ENCODE measurements at regions of chr4 and their contacts with region 1.

Region 1: GRCh38 chr4:152779513-152780266 is at the starts of genes ARFIP1 and TIGD4:
- DNase-seq: peak; percentile 99
- H3K4me3 Mint-ChIP-seq: peak within 1 kb of the TSS; percentile 100
- H3K27ac Mint-ChIP-seq: peak within 1 kb of the TSS; percentile 97
- H3K4me1 Mint-ChIP-seq: peaks cover 44% of the 10 kb centered on the region
- H3K27me3 Mint-ChIP-seq: peaks cover 30% of the 10 kb centered on the region
- total RNA-seq, gene ARFIP1: 13.0 and 14.6 TPM in 2 replicates
- total RNA-seq, gene TIGD4: 0.28 and 0.31 TPM in 2 replicates

Region 2: GRCh38 chr4:152747444-152747843 is 32.2 kb before region 1 on chr4:
- intact Hi-C with region 1: no loop called
- DNase-seq: no peak
- H3K4me3 Mint-ChIP-seq: no peak overlapping the region
- H3K27ac Mint-ChIP-seq: no peak overlapping the region
- H3K4me1 Mint-ChIP-seq: no peaks in the 10 kb centered on the region
- H3K27me3 Mint-ChIP-seq: peaks cover 6% of the 10 kb centered on the region

Region 3: GRCh38 chr4:152807294-152807829 is 27.7 kb after region 1 on chr4:
- intact Hi-C with region 1: loop called (anchors 1 kb)
- DNase-seq: no peak
- H3K4me3 Mint-ChIP-seq: peak overlapping the region; percentile 29
- H3K27ac Mint-ChIP-seq: peak overlapping the region; percentile 69
- H3K4me1 Mint-ChIP-seq: peaks cover 24% of the 10 kb centered on the region
- H3K27me3 Mint-ChIP-seq: no peaks in the 10 kb centered on the region

Region 4: DNA sequence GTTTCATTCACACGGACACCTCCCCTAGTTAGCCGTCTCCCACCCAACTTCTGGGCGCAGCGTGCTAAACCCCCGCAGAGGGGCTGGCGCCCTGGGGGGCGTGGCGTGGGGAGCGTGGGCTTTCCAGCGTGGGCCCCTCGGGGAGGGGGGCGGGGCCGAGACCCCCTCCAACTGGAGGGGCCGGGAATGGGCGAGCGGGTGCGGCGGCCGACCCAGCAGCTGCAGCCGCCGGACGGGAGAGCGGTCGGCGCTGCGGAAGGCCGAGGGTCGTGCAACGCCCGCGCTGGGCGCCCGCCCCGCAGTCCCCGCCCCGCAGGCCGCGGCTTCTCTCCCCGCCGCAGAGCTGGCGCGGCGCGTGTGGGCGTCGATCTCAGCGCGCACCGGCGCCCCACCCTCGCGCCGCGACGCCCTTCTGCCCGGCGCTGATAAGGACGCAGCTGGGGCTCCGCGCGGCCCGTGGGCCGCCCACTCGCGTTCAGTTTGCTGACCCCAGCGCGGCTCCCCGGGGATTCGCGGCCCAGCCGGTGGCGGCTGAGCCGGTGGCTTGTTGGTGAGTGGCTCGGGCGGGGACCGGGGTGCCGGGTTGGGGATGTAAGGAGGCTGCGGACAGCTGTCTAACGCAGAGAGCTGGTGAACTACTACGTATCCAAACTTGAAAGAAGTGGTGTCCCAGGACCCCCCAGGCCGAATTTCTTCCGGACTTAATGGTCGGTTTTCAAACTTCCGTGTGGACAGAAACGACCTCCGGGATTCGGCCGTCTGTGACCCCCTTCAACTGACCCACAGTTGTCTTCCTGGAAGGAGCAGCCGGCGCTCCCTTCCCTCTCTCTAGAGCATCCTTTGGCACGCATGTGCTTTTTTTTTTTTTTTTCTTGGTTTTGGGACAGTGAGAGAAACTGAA is 157.9 kb after region 1 on chr4:
- intact Hi-C with region 1: loop called (anchors 5 kb)
- DNase-seq: peak; percentile 67
- H3K4me3 Mint-ChIP-seq: peak overlapping the region; percentile 74
- H3K27ac Mint-ChIP-seq: no peak overlapping the region
- H3K4me1 Mint-ChIP-seq: peaks cover 14% of the 10 kb centered on the region
- H3K27me3 Mint-ChIP-seq: peaks cover 69% of the 10 kb centered on the region

Measured in activated CD4-positive, alpha-beta T cell treated with anti-CD3 and anti-CD28 coated beads, Interleukin-2, amount 10 ng/mL, durations not matched to agents 24 days and 14 days (primary cell).